Endothelial cell of umbilical vein (primary cell): ENCODE measurements at regions of chr15 and their contacts with region 1.

Region 1: DNA sequence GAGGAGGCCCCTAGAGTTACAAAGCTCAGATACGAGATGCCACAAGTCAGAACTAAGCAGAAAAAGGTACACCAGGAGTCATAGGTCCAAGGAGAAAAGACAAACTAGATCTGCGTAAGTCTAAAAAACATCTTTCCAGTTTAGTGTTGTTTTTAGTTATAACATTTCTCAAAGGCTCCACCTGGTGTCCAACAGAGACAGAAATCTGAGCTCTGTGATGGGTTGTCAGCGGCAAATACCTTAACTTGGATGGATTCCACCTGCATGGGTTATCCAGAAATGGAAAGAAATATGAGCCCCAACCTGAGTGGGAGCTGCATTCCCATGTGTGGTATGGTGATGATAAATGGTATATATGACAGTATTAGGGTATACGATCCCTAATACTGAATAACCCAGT is 238.6 kb upstream of the CHRM5 start:
- DNase-seq: peak; percentile 34
- H3K4me3 ChIP-seq: no peak overlapping the region
- H3K27ac ChIP-seq: no peak overlapping the region
- H3K4me1 ChIP-seq: peaks cover 8% of the 10 kb centered on the region
- H3K27me3 ChIP-seq: no peaks in the 10 kb centered on the region
- CTCF ChIP-seq: peak; percentile 19 to 28
- POLR2A ChIP-seq: no peak

Region 2: DNA sequence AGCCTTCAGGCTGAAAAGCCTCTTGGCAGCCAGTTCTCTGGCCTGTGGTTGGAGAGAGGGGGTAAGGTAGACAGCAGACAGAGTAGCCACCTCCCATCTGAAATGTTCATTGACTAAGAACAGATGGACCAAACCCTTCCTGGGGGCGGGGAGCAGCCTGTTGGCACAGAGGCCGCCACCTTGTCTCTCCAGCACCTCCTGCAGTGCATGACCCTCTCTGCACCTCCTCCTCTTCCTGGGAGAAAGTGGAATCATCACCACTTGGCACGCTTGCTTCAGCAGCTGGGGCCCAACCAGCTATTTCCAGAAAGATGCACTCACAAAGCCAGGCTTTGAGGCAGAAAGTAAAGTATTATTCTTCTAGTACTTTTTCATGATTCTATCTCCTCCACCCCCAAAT is 74.8 kb before region 1 on chr15:
- CTCF ChIA-PET with region 1: interaction called, 13 read pairs
- POLR2A ChIA-PET with region 1: no interaction called
- dilution Hi-C with region 1: no loop called
- intact Hi-C with region 1: no loop called
- DNase-seq: no peak
- H3K4me3 ChIP-seq: no peak overlapping the region
- H3K27ac ChIP-seq: no peak overlapping the region
- H3K4me1 ChIP-seq: no peaks in the 10 kb centered on the region
- H3K27me3 ChIP-seq: no peaks in the 10 kb centered on the region
- CTCF ChIP-seq: no peak
- POLR2A ChIP-seq: no peak

Region 3: GRCh38 chr15:33693166-33693800 is 36.4 kb before region 1 on chr15:
- CTCF ChIA-PET with region 1: interaction called, 12 read pairs
- POLR2A ChIA-PET with region 1: no interaction called
- dilution Hi-C with region 1: no loop called
- intact Hi-C with region 1: no loop called
- DNase-seq: no peak
- H3K4me3 ChIP-seq: no peak overlapping the region
- H3K27ac ChIP-seq: no peak overlapping the region
- H3K4me1 ChIP-seq: no peaks in the 10 kb centered on the region
- H3K27me3 ChIP-seq: peaks cover 0 to 3% of the 10 kb centered on the region in 2 experiments
- CTCF ChIP-seq: no peak
- POLR2A ChIP-seq: no peak